ENCODE measurements at regions of chr9 and their contacts with region 1.

Region 1: GRCh38 chr9:76302947-76303940 is 91.0 kb downstream of the RFK start:
- DNase-seq: peak; percentile 21
- ATAC-seq: no peak
- H3K4me3 Mint-ChIP-seq: no peak overlapping the region
- H3K27ac Mint-ChIP-seq: no peak overlapping the region
- H3K4me1 Mint-ChIP-seq: no peaks in the 10 kb centered on the region
- H3K27me3 Mint-ChIP-seq: peaks cover 7% of the 10 kb centered on the region

Region 2: DNA sequence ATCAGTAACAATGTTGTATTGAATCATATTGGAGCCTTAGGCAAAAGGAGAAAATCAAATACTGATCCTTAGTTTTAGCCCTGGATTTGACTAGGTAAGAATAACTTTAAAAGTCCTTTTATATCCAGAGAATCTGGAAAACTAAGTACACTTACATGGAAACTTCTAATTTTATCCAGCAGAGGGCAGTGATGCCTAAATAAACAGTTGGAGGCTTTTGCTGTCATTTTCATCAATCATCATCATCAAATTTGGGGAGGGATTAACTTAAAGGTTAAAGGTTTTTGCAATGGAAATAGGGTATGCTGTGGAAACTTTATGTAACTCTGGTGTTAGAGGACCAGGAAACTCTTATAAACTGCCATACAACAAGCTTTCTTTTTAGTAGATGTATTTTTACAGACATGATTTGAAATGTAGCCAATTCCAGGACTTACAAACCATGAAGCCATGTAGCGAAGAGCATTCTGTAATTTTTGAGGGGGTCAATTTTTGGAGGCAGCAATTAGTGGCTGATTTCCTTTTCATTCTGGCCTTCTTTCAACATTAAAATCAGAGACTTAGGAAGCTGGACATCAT is 1102.3 kb before region 1 on chr9:
- CTCF ChIA-PET with region 1: interaction called, 8 read pairs
- POLR2A ChIA-PET with region 1: no interaction called
- intact Hi-C with region 1: loop called (anchors 2 kb)
- DNase-seq: no peak
- ATAC-seq: no peak
- H3K4me3 Mint-ChIP-seq: no peak overlapping the region
- H3K27ac Mint-ChIP-seq: no peak overlapping the region
- H3K4me1 Mint-ChIP-seq: peaks cover 5% of the 10 kb centered on the region
- H3K27me3 Mint-ChIP-seq: no peaks in the 10 kb centered on the region

Region 3: GRCh38 chr9:75601279-75601678 is 702.0 kb before region 1 on chr9:
- CTCF ChIA-PET with region 1: no interaction called
- POLR2A ChIA-PET with region 1: no interaction called
- intact Hi-C with region 1: loop called in 1 of 2 experiments (anchors 10 kb)
- DNase-seq: no peak
- ATAC-seq: no peak
- H3K4me3 Mint-ChIP-seq: no peak overlapping the region
- H3K27ac Mint-ChIP-seq: no peak overlapping the region
- H3K4me1 Mint-ChIP-seq: no peaks in the 10 kb centered on the region
- H3K27me3 Mint-ChIP-seq: peaks cover 3% of the 10 kb centered on the region

Region 4: DNA sequence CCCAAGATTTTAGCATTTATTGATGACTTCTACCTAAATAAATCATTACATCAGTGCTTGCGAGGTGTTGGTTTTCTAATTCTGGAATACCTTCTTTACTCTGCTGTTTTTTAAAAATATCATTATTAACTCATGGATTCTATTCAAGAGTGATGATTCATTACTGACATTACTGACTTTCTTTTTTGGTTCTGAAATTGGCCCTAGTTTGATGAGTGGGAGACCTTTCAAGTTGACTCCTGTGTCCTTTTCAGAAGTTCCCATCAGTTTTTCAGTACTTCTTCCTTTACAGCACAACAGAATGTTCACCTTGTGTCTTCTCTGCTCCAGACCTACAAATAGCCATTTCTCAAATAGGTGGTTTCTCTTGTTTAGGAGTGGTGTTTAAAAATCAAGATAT is 298.7 kb before region 1 on chr9:
- CTCF ChIA-PET with region 1: no interaction called
- POLR2A ChIA-PET with region 1: no interaction called
- intact Hi-C with region 1: loop called in 1 of 2 experiments (anchors 2 kb)
- DNase-seq: no peak
- ATAC-seq: peak; percentile 73
- H3K4me3 Mint-ChIP-seq: no peak overlapping the region
- H3K27ac Mint-ChIP-seq: peak overlapping the region; percentile 32
- H3K4me1 Mint-ChIP-seq: peaks cover 50% of the 10 kb centered on the region
- H3K27me3 Mint-ChIP-seq: no peaks in the 10 kb centered on the region

Region 5: GRCh38 chr9:76704593-76705204 is 401.5 kb after region 1 on chr9:
- CTCF ChIA-PET with region 1: no interaction called
- POLR2A ChIA-PET with region 1: no interaction called
- intact Hi-C with region 1: loop called in 1 of 2 experiments (anchors 10 kb)
- DNase-seq: no peak
- ATAC-seq: no peak
- H3K4me3 Mint-ChIP-seq: no peak overlapping the region
- H3K27ac Mint-ChIP-seq: no peak overlapping the region
- H3K4me1 Mint-ChIP-seq: no peaks in the 10 kb centered on the region
- H3K27me3 Mint-ChIP-seq: peaks cover 24% of the 10 kb centered on the region